PC-3 (cell line): ENCODE measurements at regions of chr7 and their contacts with region 1.

Region 1: DNA sequence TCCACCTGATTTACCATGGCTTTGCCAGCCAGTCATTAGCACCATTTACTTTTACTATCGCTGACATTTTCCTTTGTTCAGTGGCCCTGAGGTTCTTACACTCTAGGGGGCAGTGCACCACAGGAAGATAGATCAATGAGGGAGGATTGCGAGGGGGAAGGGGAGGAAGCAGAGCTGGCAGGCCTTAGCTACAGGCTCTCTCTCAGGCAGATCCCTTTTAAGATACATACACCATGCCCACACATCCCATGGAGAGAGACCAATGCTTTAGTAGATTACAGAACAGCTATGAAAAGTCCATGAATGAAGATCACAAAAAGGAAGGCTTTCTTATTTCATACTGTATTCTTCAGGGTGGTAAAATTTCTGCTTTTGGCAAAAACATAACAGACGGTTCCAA is 47.4 kb downstream of the DENND11 start:
- DNase-seq: peak; percentile 74
- ATAC-seq: peak; percentile 82
- H3K4me3 ChIP-seq: no peak overlapping the region
- H3K27ac ChIP-seq: no peak overlapping the region
- H3K4me1 ChIP-seq: no peaks in the 10 kb centered on the region
- H3K27me3 ChIP-seq: no peaks in the 10 kb centered on the region
- CTCF ChIP-seq: peak; percentile 88

Region 2: DNA sequence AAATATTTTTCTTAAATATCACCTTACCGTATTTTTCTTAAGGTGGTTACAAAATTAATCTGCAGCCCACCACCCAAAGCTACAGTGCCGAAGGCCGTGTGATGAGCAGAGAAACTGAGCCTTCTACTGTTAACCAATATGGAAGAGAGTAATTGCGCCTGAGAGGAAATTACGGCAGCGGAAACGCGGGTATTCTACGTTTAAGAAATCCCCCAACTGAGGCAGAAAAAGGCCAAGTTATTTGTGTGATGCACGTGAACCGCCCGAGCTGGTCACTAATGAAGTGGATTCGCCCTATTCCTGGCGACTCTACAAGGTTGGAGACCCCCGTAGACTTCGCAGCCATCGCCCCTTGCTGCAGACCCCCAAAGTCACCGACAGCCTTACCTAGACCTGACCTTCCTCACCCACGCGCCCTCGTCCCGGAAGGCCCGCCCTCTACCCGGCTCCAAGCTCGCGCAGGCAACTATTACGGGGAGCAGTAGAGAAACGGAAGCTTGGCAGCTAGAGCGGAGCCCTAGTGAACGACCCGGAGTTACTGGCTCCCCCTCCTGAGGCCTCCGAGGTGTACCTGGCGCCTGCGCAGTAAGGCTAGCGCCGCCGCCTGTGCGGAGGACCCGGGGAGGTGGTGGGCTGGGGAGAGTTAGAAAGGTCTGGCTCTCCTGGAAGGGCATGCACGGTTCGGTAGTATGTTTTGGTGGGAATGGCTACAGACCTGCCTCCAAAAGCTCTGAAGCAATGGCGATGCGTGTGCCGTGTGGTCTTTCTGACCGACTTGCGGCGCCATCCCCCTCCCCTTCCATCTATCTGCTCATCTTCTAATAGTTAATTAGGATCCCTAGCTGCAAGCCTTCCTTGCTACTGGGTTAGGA is 639.8 kb before region 1 on chr7 and contains the start of gene MRPS33:
- CTCF ChIA-PET with region 1: no interaction called
- POLR2A ChIA-PET with region 1: no interaction called
- intact Hi-C with region 1: loop called (anchors 5 kb)
- DNase-seq: peak; percentile 97
- ATAC-seq: peak; percentile 97
- H3K4me3 ChIP-seq: peak within 1 kb of the TSS; percentile 79
- H3K27ac ChIP-seq: peak within 1 kb of the TSS; percentile 43
- H3K4me1 ChIP-seq: peaks cover 16% of the 10 kb centered on the region
- H3K27me3 ChIP-seq: peaks cover 16% of the 10 kb centered on the region; the same call in 1 of the 2 replicates
- CTCF ChIP-seq: peak; percentile 77
- total RNA-seq, gene MRPS33: 38.5 and 57.1 TPM in 2 replicates

Region 3: DNA sequence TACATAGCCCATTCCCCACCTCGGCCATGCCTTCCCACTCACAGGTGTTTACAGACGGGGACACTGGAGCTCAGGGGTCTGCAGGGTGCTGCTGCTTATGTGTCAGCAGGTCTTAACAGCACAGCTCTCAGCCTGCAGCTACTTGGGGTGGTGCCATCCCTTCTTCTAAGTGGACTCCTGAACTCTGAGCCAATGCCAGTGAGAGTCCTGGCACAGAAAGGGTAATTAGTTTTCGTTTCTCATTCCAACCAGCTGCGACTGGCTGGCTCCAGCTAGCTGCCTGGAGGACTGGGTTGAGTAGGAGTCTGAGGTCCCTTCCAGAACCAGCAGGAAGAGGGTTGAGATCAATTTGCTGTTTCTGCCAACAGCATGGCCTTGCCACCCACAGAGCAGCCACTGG is 191.6 kb before region 1 on chr7:
- CTCF ChIA-PET with region 1: no interaction called
- POLR2A ChIA-PET with region 1: no interaction called
- intact Hi-C with region 1: no loop called
- DNase-seq: no peak
- ATAC-seq: no peak
- H3K4me3 ChIP-seq: no peak overlapping the region
- H3K27ac ChIP-seq: no peak overlapping the region
- H3K4me1 ChIP-seq: no peaks in the 10 kb centered on the region
- H3K27me3 ChIP-seq: peaks cover 33% of the 10 kb centered on the region
- CTCF ChIP-seq: no peak

Region 4: GRCh38 chr7:141477865-141478264 is 176.7 kb before region 1 on chr7:
- CTCF ChIA-PET with region 1: no interaction called
- POLR2A ChIA-PET with region 1: no interaction called
- intact Hi-C with region 1: no loop called
- DNase-seq: peak; percentile 4
- ATAC-seq: no peak; the same call in 1 of the 2 replicates
- H3K4me3 ChIP-seq: no peak overlapping the region
- H3K27ac ChIP-seq: no peak overlapping the region
- H3K4me1 ChIP-seq: no peaks in the 10 kb centered on the region
- H3K27me3 ChIP-seq: peaks cover 55% of the 10 kb centered on the region
- CTCF ChIP-seq: no peak

Region 5: GRCh38 chr7:141511676-141512396 is 142.7 kb before region 1 on chr7:
- CTCF ChIA-PET with region 1: no interaction called
- POLR2A ChIA-PET with region 1: no interaction called
- intact Hi-C with region 1: no loop called
- DNase-seq: no peak
- ATAC-seq: no peak
- H3K4me3 ChIP-seq: no peak overlapping the region
- H3K27ac ChIP-seq: no peak overlapping the region
- H3K4me1 ChIP-seq: no peaks in the 10 kb centered on the region
- H3K27me3 ChIP-seq: peaks cover 41% of the 10 kb centered on the region
- CTCF ChIP-seq: no peak

Region 6: DNA sequence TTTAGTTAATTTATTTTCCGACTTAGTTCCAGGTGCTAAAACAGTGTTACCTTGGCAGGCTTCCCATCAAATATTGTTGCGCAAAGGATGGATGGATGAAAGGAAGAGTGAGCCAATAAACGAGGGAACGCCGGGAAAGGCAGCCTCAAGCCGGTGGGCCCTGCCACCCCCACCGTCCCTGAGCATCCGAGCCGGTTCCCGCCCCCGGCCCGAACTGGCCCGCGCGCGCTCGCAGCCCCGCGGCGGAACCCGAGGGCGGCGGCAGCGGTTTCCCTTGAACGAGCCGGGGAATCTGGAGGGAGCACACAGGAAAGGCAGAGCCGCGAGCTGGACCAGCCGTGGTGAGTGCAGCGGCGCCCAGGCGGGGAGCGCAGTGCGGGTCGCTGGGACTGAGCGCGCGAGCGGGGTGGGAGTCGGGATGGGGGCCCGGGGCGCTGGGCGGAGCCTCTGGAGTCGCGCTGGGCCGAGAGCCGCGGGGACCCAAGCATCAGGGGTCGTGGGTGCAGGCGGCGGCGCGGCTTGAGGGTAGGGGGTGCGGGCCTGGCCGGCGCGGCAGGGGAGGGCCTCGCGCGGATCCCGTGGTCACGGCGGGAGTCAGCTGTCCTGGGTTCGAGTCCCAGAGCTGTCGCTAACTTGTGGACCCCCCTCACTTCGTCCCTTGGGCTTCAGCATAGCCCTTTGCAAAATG is 103.3 kb before region 1 on chr7 and contains the start of gene AGK:
- CTCF ChIA-PET with region 1: no interaction called
- POLR2A ChIA-PET with region 1: no interaction called
- intact Hi-C with region 1: loop called (anchors 5 kb)
- DNase-seq: peak; percentile 71
- ATAC-seq: peak; percentile 98
- H3K4me3 ChIP-seq: peak within 1 kb of the TSS; percentile 84
- H3K27ac ChIP-seq: no peak within 1 kb of the TSS
- H3K4me1 ChIP-seq: peaks cover 5% of the 10 kb centered on the region
- H3K27me3 ChIP-seq: no peaks in the 10 kb centered on the region
- CTCF ChIP-seq: no peak
- total RNA-seq, gene AGK: 38.2 and 40.3 TPM in 2 replicates

Region 7: DNA sequence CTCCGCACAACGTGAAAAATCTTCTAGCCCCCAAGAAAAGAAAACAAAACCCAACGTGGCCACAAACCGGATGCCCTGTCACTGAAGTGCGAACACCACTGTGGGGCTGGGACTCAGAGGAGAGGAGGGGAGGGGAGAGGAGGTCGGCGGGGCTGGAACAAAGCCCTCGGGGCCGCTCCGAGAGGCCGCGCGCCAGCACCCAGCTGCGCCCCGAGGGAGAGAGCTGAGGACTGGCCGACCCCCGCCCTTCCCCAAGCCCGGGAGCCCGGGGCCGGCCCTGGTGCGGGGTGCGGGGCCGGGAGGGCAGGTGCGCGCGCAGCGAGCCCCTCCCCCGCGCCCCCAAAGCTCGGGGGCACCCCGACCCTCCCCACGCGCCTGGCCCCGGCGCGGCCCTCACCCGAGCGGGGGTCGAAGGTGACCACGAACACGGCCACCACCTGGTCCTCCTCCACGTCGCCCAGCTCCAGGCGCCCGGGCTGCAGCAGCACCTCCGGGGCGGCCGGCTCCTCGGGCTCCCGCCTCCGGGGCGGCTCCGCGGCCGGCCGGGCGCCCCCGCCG is 47.0 kb after region 1 on chr7:
- CTCF ChIA-PET with region 1: interaction called, 3 read pairs
- POLR2A ChIA-PET with region 1: no interaction called
- intact Hi-C with region 1: loop called (anchors 5 kb)
- DNase-seq: peak; percentile 40
- ATAC-seq: peak; percentile 40
- H3K4me3 ChIP-seq: peak overlapping the region; percentile 75
- H3K27ac ChIP-seq: no peak overlapping the region
- H3K4me1 ChIP-seq: peaks cover 60% of the 10 kb centered on the region
- H3K27me3 ChIP-seq: no peaks in the 10 kb centered on the region
- CTCF ChIP-seq: no peak

Region 8: GRCh38 chr7:141731476-141732149 is 77.1 kb after region 1 on chr7:
- CTCF ChIA-PET with region 1: interaction called, 6 read pairs
- POLR2A ChIA-PET with region 1: no interaction called
- intact Hi-C with region 1: loop called (anchors 1 kb)
- DNase-seq: no peak
- ATAC-seq: no peak
- H3K4me3 ChIP-seq: no peak overlapping the region
- H3K27ac ChIP-seq: no peak overlapping the region
- H3K4me1 ChIP-seq: peaks cover under 1% of the 10 kb centered on the region; the same call in 1 of the 2 replicates
- H3K27me3 ChIP-seq: no peaks in the 10 kb centered on the region
- CTCF ChIP-seq: no peak

Region 9: GRCh38 chr7:141754939-141755338 is 100.4 kb after region 1 on chr7:
- CTCF ChIA-PET with region 1: no interaction called
- POLR2A ChIA-PET with region 1: no interaction called
- intact Hi-C with region 1: loop called (anchors 5 kb)
- DNase-seq: peak; percentile 47
- ATAC-seq: peak; percentile 49; the same call in 1 of the 2 replicates
- H3K4me3 ChIP-seq: no peak overlapping the region
- H3K27ac ChIP-seq: no peak overlapping the region
- H3K4me1 ChIP-seq: no peaks in the 10 kb centered on the region
- H3K27me3 ChIP-seq: no peaks in the 10 kb centered on the region
- CTCF ChIP-seq: peak; percentile 59